Activated naive CD4-positive, alpha-beta T cell treated with anti-CD3 and anti-CD28 coated beads, Interleukin-2, amount 10 ng/mL, durations not matched to agents 7 days and 5 days (primary cell): ENCODE measurements at regions of chr5 and their contacts with region 1.

Region 1: GRCh38 chr5:56838409-56839039 is 23.2 kb downstream of the MAP3K1 start:
- DNase-seq: no peak
- H3K4me3 Mint-ChIP-seq: peak overlapping the region; percentile 3
- H3K27ac Mint-ChIP-seq: peak overlapping the region; percentile 66
- H3K4me1 Mint-ChIP-seq: peaks cover 82% of the 10 kb centered on the region
- H3K27me3 Mint-ChIP-seq: no peaks in the 10 kb centered on the region

Region 2: GRCh38 chr5:56264417-56265025 is 574.0 kb before region 1 on chr5:
- CTCF ChIA-PET with region 1: interaction called, 141 read pairs
- DNase-seq: peak; percentile 45
- H3K4me3 Mint-ChIP-seq: no peak overlapping the region
- H3K27ac Mint-ChIP-seq: no peak overlapping the region
- H3K4me1 Mint-ChIP-seq: peaks cover 2% of the 10 kb centered on the region
- H3K27me3 Mint-ChIP-seq: peaks cover 22% of the 10 kb centered on the region

Region 3: DNA sequence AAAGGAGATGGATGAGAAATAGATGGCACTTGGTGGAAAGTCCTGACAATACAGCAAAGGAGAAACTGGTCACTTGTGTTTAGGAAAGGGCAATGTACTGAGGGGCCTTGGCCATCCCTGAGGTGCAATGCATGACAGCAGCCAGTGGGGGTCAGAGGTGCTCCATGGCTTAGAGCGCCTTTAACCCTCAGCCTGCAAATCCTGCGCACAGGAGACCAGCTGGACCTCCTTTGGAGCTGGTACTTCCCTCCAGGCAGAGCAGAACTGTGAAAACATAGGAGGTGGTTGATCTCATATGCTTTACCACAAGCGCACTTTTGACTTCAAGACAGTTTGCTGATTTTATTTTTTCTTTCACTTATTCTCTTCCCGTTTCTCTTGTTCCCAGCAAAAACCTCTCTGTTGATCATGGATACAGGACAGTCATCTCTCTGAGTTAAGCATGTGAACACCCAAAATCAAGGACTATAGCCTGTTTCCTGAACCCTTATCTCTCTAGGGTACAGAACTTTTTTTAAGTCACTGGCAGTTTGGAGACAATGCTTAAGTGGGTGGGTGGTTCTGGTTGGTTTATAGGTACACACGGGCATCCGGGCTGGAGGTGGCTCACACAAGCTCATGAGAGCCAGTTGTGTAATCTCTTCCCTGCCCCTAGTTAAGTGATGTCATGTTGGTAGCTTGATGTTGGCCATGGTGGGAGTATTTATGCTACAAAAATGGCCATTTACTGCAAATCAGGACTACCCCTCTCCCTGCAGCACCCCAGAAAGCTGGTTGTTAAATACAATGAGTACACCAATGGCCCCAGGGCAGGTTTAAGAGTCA is 567.7 kb before region 1 on chr5:
- CTCF ChIA-PET with region 1: interaction called, 141 read pairs
- DNase-seq: peak; percentile 84
- H3K4me3 Mint-ChIP-seq: no peak overlapping the region
- H3K27ac Mint-ChIP-seq: peak overlapping the region; percentile 34
- H3K4me1 Mint-ChIP-seq: peaks cover 32% of the 10 kb centered on the region
- H3K27me3 Mint-ChIP-seq: peaks cover 9% of the 10 kb centered on the region

Region 4: DNA sequence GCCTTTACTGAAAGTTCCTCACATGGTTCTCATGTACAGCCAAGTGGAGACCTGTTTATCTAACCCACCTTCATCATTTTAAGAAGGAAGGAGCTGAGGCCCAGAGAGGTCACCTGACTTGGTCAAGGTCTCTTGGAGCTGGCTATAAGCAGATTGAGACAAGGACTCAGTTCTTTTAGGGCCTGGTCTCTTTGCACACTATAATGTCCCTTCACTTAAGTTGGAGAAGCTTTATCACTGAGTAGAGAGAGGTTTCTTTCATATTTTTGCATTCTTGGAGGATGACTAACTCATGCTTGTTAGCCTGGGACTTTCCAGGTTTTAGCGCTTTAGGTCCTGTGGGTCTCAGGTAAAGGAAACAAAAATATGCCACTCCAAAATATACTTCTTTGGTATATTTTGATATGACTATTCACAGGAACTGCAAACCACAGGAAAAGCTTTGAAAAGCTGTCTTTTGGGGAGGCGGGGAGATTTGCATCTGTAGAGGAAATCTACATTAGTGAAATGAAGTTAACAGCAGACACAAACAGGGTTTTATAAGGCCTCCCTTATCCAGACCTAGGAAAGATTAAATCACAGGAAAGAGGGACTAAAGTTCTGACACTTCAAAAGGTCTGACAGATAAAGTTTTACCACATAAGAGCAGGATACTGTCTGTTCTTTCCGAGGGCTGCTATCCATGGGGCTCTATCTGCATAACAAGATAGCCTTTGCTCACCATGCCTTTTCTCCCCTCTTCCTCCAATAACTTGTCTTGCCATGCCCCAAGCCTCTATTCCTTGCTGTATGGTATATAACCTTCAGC is 509.6 kb before region 1 on chr5:
- CTCF ChIA-PET with region 1: interaction called, 13 read pairs
- DNase-seq: peak; percentile 72
- H3K4me3 Mint-ChIP-seq: peak overlapping the region; percentile 16
- H3K27ac Mint-ChIP-seq: peak overlapping the region; percentile 93
- H3K4me1 Mint-ChIP-seq: peaks cover 65% of the 10 kb centered on the region
- H3K27me3 Mint-ChIP-seq: no peaks in the 10 kb centered on the region

Region 5: DNA sequence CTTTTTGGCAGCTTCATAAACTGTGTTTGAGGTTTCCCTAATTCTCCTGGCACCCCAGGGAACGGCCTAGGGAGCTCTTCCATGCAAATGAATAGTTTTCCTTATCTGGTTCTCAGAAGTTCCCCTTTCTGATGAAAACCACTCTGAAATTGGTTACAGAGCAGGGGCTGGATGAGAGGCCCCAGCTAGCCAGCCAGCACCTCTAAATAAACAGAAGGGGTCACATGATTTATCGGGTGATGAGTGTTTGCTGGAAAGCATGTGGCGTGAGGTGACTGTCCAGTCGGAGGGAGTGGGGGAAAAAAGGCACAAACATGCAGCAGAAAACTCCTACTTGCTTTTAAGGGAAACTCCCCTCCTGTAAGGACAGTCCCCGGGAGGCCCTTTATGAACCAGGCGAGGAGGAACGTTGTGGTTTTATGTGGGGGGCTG is 344.2 kb before region 1 on chr5:
- CTCF ChIA-PET with region 1: no interaction called
- DNase-seq: no peak
- H3K4me3 Mint-ChIP-seq: no peak overlapping the region
- H3K27ac Mint-ChIP-seq: no peak overlapping the region
- H3K4me1 Mint-ChIP-seq: peaks cover 48% of the 10 kb centered on the region
- H3K27me3 Mint-ChIP-seq: peaks cover 10% of the 10 kb centered on the region

Region 6: DNA sequence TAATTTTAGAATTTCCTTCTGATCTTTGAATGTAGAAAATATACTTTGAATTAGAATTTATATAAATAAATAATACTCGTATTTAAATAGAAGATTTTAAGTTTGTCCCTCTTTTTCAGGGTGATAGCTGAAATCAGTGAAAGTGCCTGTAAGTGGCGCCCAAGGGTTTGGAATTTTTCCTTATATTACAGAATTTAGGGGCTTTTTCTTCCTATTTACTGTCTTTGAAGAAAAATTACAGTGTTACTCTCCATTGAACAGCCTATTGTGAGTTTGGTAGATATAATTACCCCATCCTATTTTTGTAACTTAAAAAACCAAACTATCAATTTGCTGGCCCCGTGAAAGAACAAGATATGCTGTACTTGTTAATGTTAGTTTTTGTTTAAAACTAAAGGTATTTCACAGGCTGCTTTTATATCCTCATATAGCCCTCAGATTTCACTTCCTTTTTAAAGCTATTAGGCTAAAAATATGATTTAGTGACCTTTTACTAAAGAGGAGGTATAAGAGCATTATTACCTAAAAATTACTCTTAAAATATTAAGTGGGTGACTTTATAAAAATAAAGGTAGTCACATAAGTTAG is 20.0 kb before region 1 on chr5:
- CTCF ChIA-PET with region 1: interaction called, 14 read pairs
- DNase-seq: no peak
- H3K4me3 Mint-ChIP-seq: peak overlapping the region; percentile 73
- H3K27ac Mint-ChIP-seq: peak overlapping the region; percentile 77
- H3K4me1 Mint-ChIP-seq: peaks cover 55% of the 10 kb centered on the region
- H3K27me3 Mint-ChIP-seq: no peaks in the 10 kb centered on the region

Region 7: DNA sequence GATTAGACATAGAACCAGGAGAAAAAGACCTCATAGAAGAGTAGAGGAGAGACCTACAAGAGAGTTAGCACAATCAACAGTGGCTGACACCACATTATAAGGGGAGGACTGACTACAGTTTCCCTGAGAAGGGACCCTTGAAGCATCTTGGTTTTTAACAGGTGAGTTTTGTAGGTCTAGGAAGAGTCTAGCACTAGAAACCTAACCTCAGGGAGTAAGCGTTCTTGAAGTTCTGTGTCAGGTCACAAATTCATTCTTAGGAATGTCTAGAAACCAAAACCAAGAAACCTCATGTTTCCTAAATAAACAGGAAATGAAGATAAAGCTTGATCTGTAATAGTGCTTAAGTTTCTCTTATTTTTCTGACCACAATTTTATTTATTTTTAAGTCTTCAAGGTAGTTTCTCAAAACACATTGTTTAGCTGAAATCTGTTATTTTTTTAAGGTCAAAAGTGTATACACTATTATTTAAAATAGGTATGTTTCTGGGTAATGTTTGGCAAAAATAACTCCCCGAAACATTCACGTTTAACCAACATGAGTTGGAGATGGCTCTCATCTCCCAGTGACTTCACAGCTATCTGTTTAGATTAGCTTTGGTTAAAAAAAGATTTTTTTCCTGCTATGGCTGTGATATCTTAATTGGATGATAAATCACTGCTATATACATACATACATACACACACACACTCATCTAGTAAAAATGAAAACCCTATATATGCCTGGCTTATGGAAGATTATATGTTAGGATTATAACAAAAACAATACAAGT is 13.9 kb after region 1 on chr5:
- CTCF ChIA-PET with region 1: interaction called, 15 read pairs
- DNase-seq: no peak
- H3K4me3 Mint-ChIP-seq: peak overlapping the region; percentile 37
- H3K27ac Mint-ChIP-seq: peak overlapping the region; percentile 74
- H3K4me1 Mint-ChIP-seq: peaks cover 83% of the 10 kb centered on the region
- H3K27me3 Mint-ChIP-seq: no peaks in the 10 kb centered on the region

Region 8: DNA sequence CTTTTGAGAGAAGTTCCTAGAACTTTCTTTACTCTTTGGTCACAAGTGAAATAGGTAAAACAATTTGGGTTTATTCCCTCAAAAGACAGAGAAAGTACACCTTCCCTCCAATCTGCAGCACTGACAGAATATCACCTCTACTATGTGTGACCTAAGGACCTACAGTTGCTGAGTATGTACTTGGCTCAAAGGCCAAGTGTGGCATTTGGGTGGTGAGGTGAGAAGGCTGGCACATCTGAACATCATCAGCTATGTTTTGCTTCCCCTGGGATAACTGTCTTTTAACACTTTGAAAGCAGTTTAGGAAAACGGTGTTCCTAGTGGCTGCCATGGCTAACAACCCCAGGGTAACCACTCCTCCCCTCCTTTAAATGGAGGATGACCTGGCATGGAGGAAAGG is 95.8 kb after region 1 on chr5:
- CTCF ChIA-PET with region 1: no interaction called
- DNase-seq: no peak
- H3K4me3 Mint-ChIP-seq: no peak overlapping the region
- H3K27ac Mint-ChIP-seq: no peak overlapping the region
- H3K4me1 Mint-ChIP-seq: no peaks in the 10 kb centered on the region
- H3K27me3 Mint-ChIP-seq: no peaks in the 10 kb centered on the region

Region 9: GRCh38 chr5:57137401-57137800 is 298.9 kb after region 1 on chr5:
- CTCF ChIA-PET with region 1: interaction called, 12 read pairs
- DNase-seq: no peak
- H3K4me3 Mint-ChIP-seq: no peak overlapping the region
- H3K27ac Mint-ChIP-seq: no peak overlapping the region
- H3K4me1 Mint-ChIP-seq: no peaks in the 10 kb centered on the region
- H3K27me3 Mint-ChIP-seq: peaks cover 16% of the 10 kb centered on the region

Region 10: GRCh38 chr5:57772512-57772911 is 934.0 kb after region 1 on chr5:
- CTCF ChIA-PET with region 1: no interaction called
- DNase-seq: no peak
- H3K4me3 Mint-ChIP-seq: no peak overlapping the region
- H3K27ac Mint-ChIP-seq: no peak overlapping the region
- H3K4me1 Mint-ChIP-seq: no peaks in the 10 kb centered on the region
- H3K27me3 Mint-ChIP-seq: peaks cover 4% of the 10 kb centered on the region